CD4-positive, alpha-beta memory T cell (primary cell): ENCODE measurements at regions of chr11 and their contacts with region 1.

Region 1: GRCh38 chr11:35305670-35306382 is 113.5 kb downstream of the SLC1A2 start:
- DNase-seq: peak in 4 of 5 donors; percentile 35 to 49 (median 44)
- H3K4me3 ChIP-seq: no peak overlapping the region
- H3K4me3 Mint-ChIP-seq: peak overlapping the region; percentile 58 to 85 (median 79)
- H3K27ac ChIP-seq: no peak overlapping the region
- H3K27ac Mint-ChIP-seq: peak overlapping the region; percentile 8 to 95 (median 90)
- H3K4me1 ChIP-seq: peaks cover 24% of the 10 kb centered on the region
- H3K4me1 Mint-ChIP-seq: peaks cover 15 to 29% (median 25%) of the 10 kb centered on the region in 4 donors
- H3K27me3 ChIP-seq: no peaks in the 10 kb centered on the region
- H3K27me3 Mint-ChIP-seq: no peaks in the 10 kb centered on the region

Region 2: DNA sequence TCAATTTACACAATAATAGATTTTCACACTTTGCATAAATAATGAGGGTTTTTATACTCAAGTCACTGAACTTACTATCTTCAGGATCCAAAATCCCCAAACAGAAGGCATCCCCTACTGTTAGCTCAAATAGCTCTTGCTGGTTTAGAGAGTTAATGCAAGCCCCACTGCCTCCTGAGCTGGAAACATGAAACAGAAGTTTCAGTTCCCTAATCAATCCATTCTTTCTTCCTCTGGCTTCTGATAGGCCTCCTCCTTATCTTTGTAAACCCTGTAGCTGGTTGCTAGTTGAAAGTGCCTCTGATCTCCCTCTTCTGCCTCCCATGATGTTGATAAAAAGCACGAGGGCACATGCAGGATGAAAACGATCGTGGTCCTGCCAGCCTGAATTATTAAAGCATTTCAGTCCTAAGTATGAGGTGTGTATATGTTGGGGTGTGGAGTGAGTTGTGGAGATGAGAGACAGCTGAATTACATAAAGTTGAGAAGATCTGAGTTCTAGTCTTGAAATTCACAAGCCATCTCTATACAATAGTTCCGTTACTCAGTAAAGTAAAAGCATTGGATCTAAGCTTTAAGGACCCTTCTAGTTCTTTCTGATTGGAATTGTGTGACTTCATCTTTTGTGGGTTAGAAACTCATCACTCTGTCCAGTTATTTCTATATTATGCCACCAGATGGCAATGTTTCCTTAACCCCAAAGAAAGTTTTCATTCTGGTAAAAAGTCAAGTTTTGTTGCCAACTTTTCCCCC is 719.9 kb before region 1 on chr11:
- CTCF ChIA-PET with region 1: interaction called, 8 read pairs
- POLR2A ChIA-PET with region 1: no interaction called
- intact Hi-C with region 1: loop called (anchors 5 kb)
- DNase-seq: peak in 4 of 5 donors; percentile 19 to 39 (median 38)
- H3K4me3 ChIP-seq: no peak overlapping the region
- H3K4me3 Mint-ChIP-seq: no peak overlapping the region
- H3K27ac ChIP-seq: no peak overlapping the region
- H3K27ac Mint-ChIP-seq: no peak overlapping the region
- H3K4me1 ChIP-seq: no peaks in the 10 kb centered on the region
- H3K4me1 Mint-ChIP-seq: peaks cover 0 to 3% (median 0%) of the 10 kb centered on the region in 4 donors
- H3K27me3 ChIP-seq: no peaks in the 10 kb centered on the region
- H3K27me3 Mint-ChIP-seq: peaks cover 3 to 6% of the 10 kb centered on the region in 2 donors

Region 3: DNA sequence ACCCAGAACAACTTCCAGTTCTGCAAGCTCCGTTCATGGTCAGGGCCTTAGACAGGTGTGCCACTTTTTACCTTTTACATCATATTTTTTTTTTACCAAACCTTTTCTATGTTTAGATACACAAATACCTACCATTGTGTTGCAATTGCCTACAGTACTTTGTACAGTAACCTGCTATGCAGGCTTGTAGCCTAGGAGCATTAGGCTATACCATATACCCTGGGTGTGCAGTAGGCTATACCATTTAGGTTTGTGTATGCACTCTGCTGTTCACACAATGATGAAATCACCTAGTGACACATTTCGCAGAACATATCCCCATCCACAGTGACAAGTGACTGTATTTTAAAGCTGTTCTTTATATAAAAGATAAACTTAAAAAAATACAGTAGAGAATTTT is 419.2 kb before region 1 on chr11:
- CTCF ChIA-PET with region 1: no interaction called
- POLR2A ChIA-PET with region 1: no interaction called
- intact Hi-C with region 1: no loop called
- DNase-seq: no peak
- H3K4me3 ChIP-seq: no peak overlapping the region
- H3K4me3 Mint-ChIP-seq: no peak overlapping the region
- H3K27ac ChIP-seq: no peak overlapping the region
- H3K27ac Mint-ChIP-seq: no peak overlapping the region
- H3K4me1 ChIP-seq: no peaks in the 10 kb centered on the region
- H3K4me1 Mint-ChIP-seq: no peaks in the 10 kb centered on the region
- H3K27me3 ChIP-seq: no peaks in the 10 kb centered on the region
- H3K27me3 Mint-ChIP-seq: no peaks in the 10 kb centered on the region

Region 4: DNA sequence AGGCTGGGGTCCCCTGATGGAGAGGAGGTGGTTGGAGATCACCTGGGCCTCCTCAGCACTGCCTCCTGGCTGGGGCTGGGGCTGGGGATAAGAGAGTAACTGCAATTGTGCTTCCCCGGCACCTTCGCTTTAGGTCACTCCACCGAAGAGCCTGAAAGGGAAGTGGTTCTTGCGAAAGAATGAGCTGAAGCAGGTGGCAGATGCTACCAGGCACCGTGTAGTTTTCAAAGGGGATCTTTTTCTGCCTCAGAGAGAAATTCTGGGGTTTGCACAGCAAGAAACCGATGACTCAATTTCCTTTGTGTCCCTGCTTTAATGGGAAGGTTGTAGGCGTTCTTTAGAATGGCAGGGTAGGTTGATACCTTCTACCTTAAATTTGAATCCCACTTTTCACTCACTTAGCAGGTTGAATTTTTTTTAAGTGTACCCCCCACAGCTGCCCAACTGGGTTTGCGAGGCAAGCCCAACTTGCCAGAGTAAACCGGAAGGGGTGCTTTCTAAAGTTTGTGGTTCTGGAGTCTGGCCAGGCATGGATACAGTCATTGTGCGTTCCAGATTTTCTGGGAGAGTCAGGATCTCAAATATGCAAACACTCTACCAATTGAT is 161.6 kb before region 1 on chr11:
- CTCF ChIA-PET with region 1: interaction called, 14 read pairs
- POLR2A ChIA-PET with region 1: interaction called, 7 read pairs
- intact Hi-C with region 1: loop called (anchors 1 kb)
- DNase-seq: peak; percentile 67 to 90 (median 76)
- H3K4me3 ChIP-seq: peak overlapping the region; percentile 55 to 59
- H3K4me3 Mint-ChIP-seq: peak overlapping the region; percentile 83 to 99 (median 98)
- H3K27ac ChIP-seq: peak overlapping the region; percentile 73
- H3K27ac Mint-ChIP-seq: peak overlapping the region; percentile 93 to 100 (median 95)
- H3K4me1 ChIP-seq: peaks cover 72% of the 10 kb centered on the region
- H3K4me1 Mint-ChIP-seq: peaks cover 60 to 88% (median 70%) of the 10 kb centered on the region in 4 donors
- H3K27me3 ChIP-seq: no peaks in the 10 kb centered on the region
- H3K27me3 Mint-ChIP-seq: no peaks in the 10 kb centered on the region

Region 5: GRCh38 chr11:35237860-35238715 is 67.7 kb before region 1 on chr11:
- CTCF ChIA-PET with region 1: interaction called, 58 read pairs
- POLR2A ChIA-PET with region 1: interaction called, 5 read pairs
- intact Hi-C with region 1: loop called (anchors 5 kb)
- DNase-seq: peak; percentile 50 to 64 (median 55)
- H3K4me3 ChIP-seq: no peak overlapping the region
- H3K4me3 Mint-ChIP-seq: peak overlapping the region in 6 of 8 donors; percentile 4 to 66 (median 38)
- H3K27ac ChIP-seq: no peak overlapping the region
- H3K27ac Mint-ChIP-seq: peak overlapping the region; percentile 78 to 97 (median 90)
- H3K4me1 ChIP-seq: peaks cover 73% of the 10 kb centered on the region
- H3K4me1 Mint-ChIP-seq: peaks cover 61 to 94% (median 76%) of the 10 kb centered on the region in 4 donors
- H3K27me3 ChIP-seq: no peaks in the 10 kb centered on the region
- H3K27me3 Mint-ChIP-seq: no peaks in the 10 kb centered on the region

Region 6: DNA sequence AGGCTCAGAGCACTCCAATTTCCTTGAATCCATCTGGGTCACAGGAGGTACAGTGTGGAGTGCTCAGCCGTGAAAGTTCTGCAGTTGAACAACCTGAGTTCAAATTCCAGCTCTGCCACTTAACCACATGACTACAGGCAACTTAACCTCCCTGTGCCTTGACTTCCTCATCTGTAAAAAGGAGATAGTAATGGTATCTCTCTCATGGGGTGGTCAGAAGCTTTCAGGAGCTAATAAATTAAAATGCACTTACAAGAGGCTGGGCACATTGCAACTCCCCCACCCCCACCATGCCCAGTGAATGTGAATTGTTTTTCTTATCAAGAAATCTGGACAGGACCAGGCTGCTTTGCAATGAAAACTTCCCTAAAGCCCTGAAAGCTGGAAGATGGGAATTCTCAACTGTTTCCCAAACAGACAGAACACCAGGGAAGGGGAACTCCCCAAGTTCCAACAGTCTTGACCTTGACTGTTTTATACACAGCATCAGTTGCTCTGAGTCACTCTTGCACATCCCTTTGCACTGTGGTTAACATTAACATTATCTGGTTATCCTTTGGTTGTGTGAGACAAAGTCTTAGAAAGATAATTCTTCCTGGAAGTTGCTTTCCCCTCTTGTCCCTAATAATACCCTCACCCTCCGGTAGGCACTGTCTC is 23.5 kb before region 1 on chr11:
- CTCF ChIA-PET with region 1: interaction called, 11 read pairs
- POLR2A ChIA-PET with region 1: interaction called, 3 read pairs
- intact Hi-C with region 1: no loop called
- DNase-seq: no peak
- H3K4me3 ChIP-seq: no peak overlapping the region
- H3K4me3 Mint-ChIP-seq: no peak overlapping the region
- H3K27ac ChIP-seq: no peak overlapping the region
- H3K27ac Mint-ChIP-seq: peak overlapping the region in 2 of 7 donors; percentile 13 to 47
- H3K4me1 ChIP-seq: no peaks in the 10 kb centered on the region
- H3K4me1 Mint-ChIP-seq: peaks cover 0 to 4% (median 2%) of the 10 kb centered on the region in 4 donors
- H3K27me3 ChIP-seq: no peaks in the 10 kb centered on the region
- H3K27me3 Mint-ChIP-seq: no peaks in the 10 kb centered on the region

Region 7: GRCh38 chr11:35334385-35335090 is 28.7 kb after region 1 on chr11:
- CTCF ChIA-PET with region 1: interaction called, 28 read pairs
- POLR2A ChIA-PET with region 1: interaction called, 4 read pairs
- intact Hi-C with region 1: no loop called
- DNase-seq: peak; percentile 22 to 63 (median 26)
- H3K4me3 ChIP-seq: no peak overlapping the region
- H3K4me3 Mint-ChIP-seq: peak overlapping the region in 2 of 8 donors; percentile 31 to 59
- H3K27ac ChIP-seq: no peak overlapping the region
- H3K27ac Mint-ChIP-seq: peak overlapping the region; percentile 19 to 93 (median 82)
- H3K4me1 ChIP-seq: peaks cover 42% of the 10 kb centered on the region
- H3K4me1 Mint-ChIP-seq: peaks cover 35 to 47% (median 42%) of the 10 kb centered on the region in 4 donors
- H3K27me3 ChIP-seq: no peaks in the 10 kb centered on the region
- H3K27me3 Mint-ChIP-seq: peaks cover 0 to 2% of the 10 kb centered on the region in 2 donors